GM23248 (cell line): ENCODE measurements at regions of chr18 and their contacts with region 1.

Region 1: GRCh38 chr18:76697441-76697901 is 124.9 kb upstream of the ZNF236 start:
- DNase-seq: peak; percentile 58
- H3K4me3 ChIP-seq: peak overlapping the region; percentile 23; the same call in 1 of the 2 replicates
- H3K27ac ChIP-seq: no peak overlapping the region
- H3K4me1 ChIP-seq: no peaks in the 10 kb centered on the region
- H3K27me3 ChIP-seq: peaks cover 12% of the 10 kb centered on the region; the same call in 1 of the 2 replicates

Region 2: GRCh38 chr18:76405681-76406356 is 291.7 kb before region 1 on chr18:
- in situ Hi-C with region 1: loop called (anchors 10 kb)
- DNase-seq: peak; percentile 37
- H3K4me3 ChIP-seq: no peak overlapping the region
- H3K27ac ChIP-seq: no peak overlapping the region
- H3K4me1 ChIP-seq: peaks cover 2% of the 10 kb centered on the region; the same call in 1 of the 2 replicates
- H3K27me3 ChIP-seq: no peaks in the 10 kb centered on the region

Region 3: DNA sequence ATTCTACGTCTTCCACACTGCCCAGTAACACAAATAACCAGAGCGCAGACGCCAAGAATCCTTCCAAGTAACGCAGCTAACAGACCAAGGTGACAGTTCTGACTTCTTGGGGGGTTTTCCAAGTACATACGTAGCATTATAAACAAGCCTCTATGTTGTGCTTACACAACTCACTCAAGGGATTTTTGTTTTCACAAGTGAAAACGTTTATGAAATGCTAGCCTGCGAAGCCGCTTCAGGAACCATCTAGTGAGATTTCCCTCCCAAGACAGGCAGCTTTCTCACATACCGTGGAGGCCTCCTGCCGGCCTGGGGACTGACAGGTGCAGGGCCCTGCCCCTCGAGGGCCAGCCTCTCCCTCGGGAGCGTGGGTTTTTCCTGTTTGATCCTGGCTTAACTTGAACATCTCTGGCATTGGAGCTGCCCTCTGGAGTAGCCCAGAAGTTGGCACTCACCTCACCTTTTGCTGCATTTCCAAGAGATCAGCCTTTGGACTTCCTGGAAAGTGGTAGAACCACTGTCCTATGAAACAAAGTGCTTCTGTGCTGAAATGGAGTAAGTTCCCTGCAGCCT is 284.0 kb after region 1 on chr18:
- in situ Hi-C with region 1: no loop called
- DNase-seq: no peak
- H3K4me3 ChIP-seq: no peak overlapping the region
- H3K27ac ChIP-seq: no peak overlapping the region
- H3K4me1 ChIP-seq: no peaks in the 10 kb centered on the region
- H3K27me3 ChIP-seq: no peaks in the 10 kb centered on the region